GM18951 (cell line): ENCODE measurements at regions of chr1 and their contacts with region 1.

Region 1: GRCh38 chr1:176897350-176898236 is 266.9 kb downstream of the ASTN1 start:
- POLR2A ChIP-seq: no peak

Region 2: DNA sequence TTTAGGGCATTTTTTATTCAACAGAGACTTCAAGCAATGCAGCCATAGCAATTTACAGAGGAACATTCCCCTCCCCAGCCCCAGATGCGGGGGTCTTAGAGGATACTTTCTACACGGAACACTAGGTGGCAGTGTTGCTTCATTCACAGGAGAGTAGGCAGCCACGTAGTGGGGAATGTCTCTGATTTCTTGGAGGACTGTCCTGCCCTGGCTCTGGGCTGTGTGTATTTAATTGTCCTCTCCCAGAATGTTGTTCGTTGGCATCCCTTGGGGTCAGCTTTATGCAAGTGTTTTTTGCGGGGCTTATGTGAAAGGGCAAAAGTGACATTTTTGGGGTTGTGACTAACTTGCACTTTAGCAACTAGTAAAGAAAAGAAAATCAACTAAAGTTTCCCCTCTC is 337.7 kb before region 1 on chr1:
- in situ Hi-C with region 1: loop called (anchors 25 kb)
- POLR2A ChIP-seq: no peak

Region 3: DNA sequence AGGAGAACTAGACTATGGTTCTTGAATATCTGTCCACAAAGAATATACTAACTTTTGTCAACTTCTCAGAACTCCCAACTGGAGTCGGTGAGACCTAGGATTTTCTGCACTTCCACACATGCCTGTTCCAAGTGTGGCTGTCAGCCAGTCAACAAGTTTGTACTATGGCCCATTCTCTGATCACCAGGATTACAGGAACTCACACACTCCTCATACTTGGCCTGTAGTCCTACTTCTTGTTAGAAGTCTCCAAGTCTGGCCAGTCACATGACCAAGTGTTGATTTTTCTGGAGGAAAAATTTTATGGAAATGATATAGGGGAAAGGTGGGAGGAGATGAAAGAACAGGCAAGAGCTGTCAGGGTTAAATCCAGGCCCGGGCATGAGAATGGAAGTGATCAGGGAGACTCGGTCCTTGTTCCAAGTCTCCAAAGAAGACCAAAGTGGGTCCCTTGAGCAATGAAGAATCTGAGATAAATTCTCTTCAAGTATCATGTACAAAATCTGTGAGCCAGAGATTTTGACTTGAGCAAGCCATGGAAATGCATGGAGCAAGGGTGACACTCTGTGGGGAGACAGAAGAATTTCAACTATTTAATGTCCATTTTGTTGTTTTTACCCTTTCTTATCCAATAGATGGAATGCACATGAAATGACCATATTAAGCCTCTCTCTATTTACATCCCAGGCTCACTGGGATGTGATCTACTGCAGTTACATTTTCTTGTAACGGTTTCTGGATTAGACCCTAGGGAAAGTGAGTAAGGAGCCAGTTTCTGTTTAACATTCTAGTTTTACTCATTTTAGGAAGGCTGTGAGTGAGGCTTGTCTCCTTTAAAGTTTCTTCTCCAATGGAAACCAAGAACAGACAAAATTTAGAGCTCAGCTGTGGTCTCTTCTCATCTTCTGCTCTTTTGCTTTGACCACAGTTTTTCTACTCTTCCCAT is 54.0 kb before region 1 on chr1:
- in situ Hi-C with region 1: no loop called
- POLR2A ChIP-seq: no peak

Region 4: DNA sequence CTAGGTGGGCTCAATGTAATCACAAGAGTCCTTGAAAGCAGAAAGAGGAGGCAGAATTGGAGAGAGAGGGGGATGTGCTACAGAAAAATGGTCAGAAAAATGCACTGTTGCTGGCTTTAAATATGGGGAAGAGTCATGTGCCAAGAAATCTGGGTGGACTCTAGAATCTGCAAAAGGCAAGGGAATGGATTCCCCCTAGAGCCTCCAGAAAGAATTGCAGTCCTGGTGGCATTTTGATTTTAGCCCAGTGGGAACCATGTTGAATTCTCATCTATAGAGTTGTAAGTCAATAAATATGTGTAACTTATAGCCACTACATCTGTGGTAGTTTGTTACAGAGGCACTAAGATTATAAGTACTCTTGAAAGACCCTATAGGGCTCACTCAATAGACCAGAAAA is 56.6 kb after region 1 on chr1:
- in situ Hi-C with region 1: no loop called
- POLR2A ChIP-seq: no peak

Region 5: DNA sequence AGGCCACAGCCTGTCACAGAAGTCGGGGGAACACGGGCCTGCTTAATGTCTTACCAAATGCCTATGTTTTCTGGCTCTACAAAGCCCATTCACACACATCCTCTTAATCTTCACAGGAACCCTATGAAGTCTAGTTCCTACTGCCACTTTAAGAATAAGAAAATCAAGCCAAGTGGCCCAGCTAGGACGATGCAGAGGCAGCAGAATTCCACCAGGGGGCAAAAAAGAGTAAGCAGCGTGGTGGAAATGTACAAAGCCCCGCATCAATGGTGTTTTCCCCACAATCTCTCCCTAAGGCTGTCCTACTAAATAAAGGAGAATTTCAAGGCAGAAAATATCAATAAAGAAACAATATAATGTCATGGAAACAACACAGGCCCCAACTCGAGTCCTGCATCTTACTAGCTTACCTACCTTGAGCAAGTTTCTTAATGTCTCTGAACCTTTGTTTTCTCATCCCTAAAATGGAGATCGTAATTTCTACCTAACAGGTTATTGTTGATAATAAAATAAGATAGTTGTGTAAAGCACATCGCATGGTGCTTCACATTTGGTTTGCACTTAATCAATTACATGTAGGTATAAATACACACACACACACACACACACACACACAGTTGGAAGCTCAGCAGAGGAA is 1050.9 kb after region 1 on chr1:
- in situ Hi-C with region 1: loop called (anchors 25 kb)
- POLR2A ChIP-seq: no peak